A549 (cell line): ENCODE measurements at regions of chr10 and their contacts with region 1.

Region 1: GRCh38 chr10:80504158-80504811 is 33.4 kb upstream of the SH2D4B start:
- DNase-seq: no peak
- ATAC-seq: peak; percentile 0 to 8; a peak in 3 of 6 replicates
- H3K4me3 ChIP-seq: no peak overlapping the region
- H3K27ac ChIP-seq: peak overlapping the region; percentile 100
- H3K4me1 ChIP-seq: peaks cover 100% of the 10 kb centered on the region
- CTCF ChIP-seq: no peak
- EP300 ChIP-seq: no peak
- POLR2A ChIP-seq: no peak
- RAD21 ChIP-seq: no peak

Region 2: GRCh38 chr10:80382989-80383388 is 121.3 kb before region 1 on chr10:
- CTCF ChIA-PET with region 1: interaction called, 13 read pairs
- POLR2A ChIA-PET with region 1: no interaction called
- DNase-seq: peak; percentile 36 to 46
- ATAC-seq: peak; percentile 63 to 70; a peak in 3 of 6 replicates
- H3K4me3 ChIP-seq: no peak overlapping the region
- H3K27ac ChIP-seq: peak overlapping the region in 1 of 2 experiments; percentile 46; a peak in 1 of 6 replicates
- H3K4me1 ChIP-seq: no peaks in the 10 kb centered on the region
- CTCF ChIP-seq: peak; percentile 86
- EP300 ChIP-seq: no peak
- POLR2A ChIP-seq: no peak
- RAD21 ChIP-seq: peak; percentile 85 to 90

Region 3: GRCh38 chr10:80408242-80409101 is 95.8 kb before region 1 on chr10 and contains the start of gene PRXL2A:
- CTCF ChIA-PET with region 1: interaction called, 19 read pairs
- POLR2A ChIA-PET with region 1: interaction called, 4 read pairs
- DNase-seq: peak; percentile 78 to 92
- ATAC-seq: peak; percentile 95 to 97
- H3K4me3 ChIP-seq: peak within 1 kb of the TSS; percentile 73
- H3K27ac ChIP-seq: peak within 1 kb of the TSS; percentile 83 to 90
- H3K4me1 ChIP-seq: peaks cover 27% of the 10 kb centered on the region; the same call in 2 of the 3 replicates
- CTCF ChIP-seq: no peak
- EP300 ChIP-seq: no peak
- POLR2A ChIP-seq: peak; percentile 71
- RAD21 ChIP-seq: no peak
- polyA plus RNA-seq, gene PRXL2A: 47.6 and 59.3 TPM in 2 replicates

Region 4: DNA sequence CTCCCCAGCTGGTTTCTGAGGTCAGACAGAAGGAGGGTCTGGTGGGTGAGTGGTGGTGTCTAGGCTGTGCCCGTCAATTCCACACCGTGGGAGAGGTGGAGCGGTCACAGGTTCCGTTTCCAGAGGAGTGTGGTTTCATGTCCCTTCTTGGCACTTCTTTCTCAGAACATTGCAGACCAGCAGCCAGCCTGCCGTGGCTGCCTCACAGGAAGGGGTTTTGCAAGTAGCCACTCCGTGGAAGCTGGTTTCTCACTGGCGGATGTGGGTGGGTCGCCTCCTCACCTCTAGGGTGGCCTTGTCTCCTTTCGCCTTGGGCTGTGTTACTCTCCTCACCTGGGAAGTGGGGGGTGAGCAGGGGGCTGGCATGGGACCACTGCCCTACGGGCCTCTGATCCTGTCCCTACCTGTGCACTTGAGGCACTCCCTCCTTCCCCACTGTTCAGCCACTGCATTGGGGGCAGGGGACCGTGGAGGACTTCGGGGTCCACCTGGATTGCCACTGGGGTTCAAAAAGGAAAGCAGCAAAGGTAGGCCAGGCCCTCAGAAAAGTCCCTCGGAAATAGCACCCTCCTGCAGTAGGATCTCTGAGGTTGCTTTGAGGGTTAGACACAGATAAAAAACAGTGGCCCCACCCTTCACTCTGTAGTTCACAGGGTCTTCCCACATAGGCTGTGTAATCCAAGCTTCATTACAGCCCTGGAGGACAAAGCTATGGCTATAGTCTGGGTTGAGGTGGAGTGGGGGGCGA is 16.3 kb before region 1 on chr10:
- CTCF ChIA-PET with region 1: interaction called, 27 read pairs
- POLR2A ChIA-PET with region 1: no interaction called
- DNase-seq: no peak
- ATAC-seq: no peak
- H3K4me3 ChIP-seq: no peak overlapping the region
- H3K27ac ChIP-seq: peak overlapping the region; percentile 35 to 90
- H3K4me1 ChIP-seq: peaks cover 99% of the 10 kb centered on the region
- CTCF ChIP-seq: no peak
- EP300 ChIP-seq: no peak
- POLR2A ChIP-seq: no peak
- RAD21 ChIP-seq: no peak

Region 5: DNA sequence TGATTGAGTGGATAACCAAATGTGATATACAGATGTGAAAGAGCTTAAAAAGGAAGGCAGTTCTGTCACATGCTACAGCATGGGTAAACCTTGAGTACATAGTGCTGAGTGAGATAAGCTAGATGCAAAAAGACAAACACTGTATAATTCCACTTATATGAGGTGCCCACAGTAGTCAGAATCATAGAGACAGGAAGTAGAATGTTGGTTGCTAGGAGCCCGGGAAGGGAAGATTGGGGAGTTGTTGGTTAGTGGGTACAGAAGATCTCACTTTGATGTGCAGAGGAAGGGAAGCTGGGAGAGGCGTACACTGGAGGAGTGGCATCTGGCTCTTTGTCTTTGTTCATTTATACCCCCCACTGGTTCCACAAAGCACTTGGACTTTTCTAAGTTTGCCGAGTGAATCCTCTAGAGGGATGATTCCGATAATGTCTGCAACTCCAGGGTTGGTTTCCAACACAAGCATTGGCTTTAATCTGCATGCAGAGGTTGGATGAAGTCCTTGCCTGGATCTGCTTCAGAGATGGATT is 10.7 kb before region 1 on chr10:
- CTCF ChIA-PET with region 1: interaction called, 26 read pairs
- POLR2A ChIA-PET with region 1: no interaction called
- DNase-seq: peak in 1 of 2 experiments; percentile 51
- ATAC-seq: peak; percentile 17 to 36; a peak in 5 of 6 replicates
- H3K4me3 ChIP-seq: no peak overlapping the region
- H3K27ac ChIP-seq: peak overlapping the region; percentile 90 to 100
- H3K4me1 ChIP-seq: peaks cover 99% of the 10 kb centered on the region
- CTCF ChIP-seq: no peak
- EP300 ChIP-seq: no peak
- POLR2A ChIP-seq: no peak
- RAD21 ChIP-seq: no peak

Region 6: DNA sequence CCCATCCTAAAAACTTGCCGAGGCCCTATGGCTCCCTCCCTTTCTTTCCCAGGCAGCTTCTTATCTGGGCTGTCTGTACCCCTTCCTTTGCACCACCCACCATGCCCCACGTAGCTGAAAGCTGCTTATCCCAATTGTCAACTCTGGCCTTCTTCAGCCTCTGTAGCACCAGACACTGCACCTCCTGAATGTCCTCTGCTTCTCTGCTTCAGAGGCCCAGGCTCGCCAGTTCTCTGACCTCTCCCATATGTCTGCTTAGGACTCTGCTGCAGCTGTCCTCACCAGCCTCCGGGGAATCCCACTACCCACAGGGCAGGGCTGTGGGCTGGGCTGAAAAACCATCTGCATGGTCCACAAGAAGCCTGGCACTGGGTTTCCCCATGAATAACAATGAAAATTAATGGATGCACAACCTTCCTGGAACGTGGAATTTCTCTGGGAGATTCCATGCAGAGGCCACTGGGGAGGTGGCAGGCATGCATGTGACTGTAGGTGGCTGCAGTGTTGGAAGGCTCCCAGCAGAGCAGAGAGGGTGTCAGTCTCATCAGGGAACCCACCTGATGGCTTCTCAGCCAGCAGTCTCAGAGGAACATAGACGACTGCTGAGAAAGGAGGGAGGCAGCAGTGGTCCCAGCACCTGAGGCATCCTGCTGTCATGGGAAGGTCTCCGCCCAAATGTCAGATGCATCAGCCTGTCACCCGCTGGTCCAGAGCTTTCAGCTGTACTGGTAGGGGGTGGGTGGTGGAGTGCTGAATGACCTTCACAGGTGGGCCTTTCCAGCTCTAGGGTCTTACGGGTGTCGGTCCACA is 16.6 kb after region 1 on chr10:
- CTCF ChIA-PET with region 1: interaction called, 41 read pairs
- POLR2A ChIA-PET with region 1: no interaction called
- DNase-seq: no peak
- ATAC-seq: no peak
- H3K4me3 ChIP-seq: no peak overlapping the region
- H3K27ac ChIP-seq: peak overlapping the region; percentile 27 to 62; a peak in 3 of 6 replicates
- H3K4me1 ChIP-seq: peaks cover 56% of the 10 kb centered on the region
- CTCF ChIP-seq: no peak
- EP300 ChIP-seq: no peak
- POLR2A ChIP-seq: no peak
- RAD21 ChIP-seq: no peak

Region 7: GRCh38 chr10:80535671-80536365 is 31.5 kb after region 1 on chr10:
- CTCF ChIA-PET with region 1: interaction called, 14 read pairs
- POLR2A ChIA-PET with region 1: no interaction called
- DNase-seq: peak; percentile 82 to 89
- ATAC-seq: peak; percentile 92 to 96
- H3K4me3 ChIP-seq: peak overlapping the region; percentile 56
- H3K27ac ChIP-seq: peak overlapping the region; percentile 79 to 97
- H3K4me1 ChIP-seq: peaks cover 27% of the 10 kb centered on the region
- CTCF ChIP-seq: peak; percentile 76
- EP300 ChIP-seq: no peak
- POLR2A ChIP-seq: peak; percentile 81
- RAD21 ChIP-seq: peak; percentile 56 to 77

Region 8: GRCh38 chr10:80630324-80630723 is 126.0 kb after region 1 on chr10:
- CTCF ChIA-PET with region 1: no interaction called
- POLR2A ChIA-PET with region 1: no interaction called
- DNase-seq: no peak
- ATAC-seq: no peak
- H3K4me3 ChIP-seq: no peak overlapping the region
- H3K27ac ChIP-seq: no peak overlapping the region
- H3K4me1 ChIP-seq: no peaks in the 10 kb centered on the region
- CTCF ChIP-seq: no peak
- EP300 ChIP-seq: no peak
- POLR2A ChIP-seq: no peak
- RAD21 ChIP-seq: no peak